RWPE1 (cell line): ENCODE measurements at regions of chr12 and their contacts with region 1.

Region 1: DNA sequence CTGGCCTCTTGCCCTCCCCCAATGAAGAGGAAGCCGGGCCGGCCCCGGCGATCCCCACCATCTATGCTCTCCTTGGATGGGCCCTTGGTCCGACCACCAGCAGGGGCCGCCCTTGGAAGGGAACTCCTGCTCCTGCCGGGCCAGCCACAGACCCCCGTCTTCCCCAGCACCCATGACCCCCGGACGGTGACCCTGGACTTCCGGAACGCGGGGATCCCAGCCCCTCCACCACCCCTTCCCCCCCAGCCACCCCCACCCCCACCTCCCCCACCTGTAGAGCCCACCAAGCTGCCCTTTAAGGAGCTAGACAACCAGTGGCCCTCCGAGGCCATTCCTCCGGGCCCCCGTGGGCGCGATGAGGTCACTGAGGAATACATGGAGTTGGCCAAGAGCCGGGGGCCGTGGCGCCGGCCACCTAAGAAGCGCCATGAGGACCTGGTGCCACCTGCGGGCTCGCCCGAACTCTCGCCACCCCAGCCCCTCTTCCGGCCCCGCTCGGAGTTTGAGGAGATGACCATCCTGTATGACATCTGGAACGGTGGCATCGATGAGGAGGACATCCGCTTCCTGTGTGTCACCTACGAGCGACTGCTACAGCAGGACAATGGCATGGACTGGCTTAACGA is 19.4 kb downstream of the SETD1B start:
- DNase-seq: no peak
- H3K27ac ChIP-seq: peak overlapping the region; percentile 35; the same call in 1 of the 2 replicates
- CTCF ChIP-seq: no peak

Region 2: DNA sequence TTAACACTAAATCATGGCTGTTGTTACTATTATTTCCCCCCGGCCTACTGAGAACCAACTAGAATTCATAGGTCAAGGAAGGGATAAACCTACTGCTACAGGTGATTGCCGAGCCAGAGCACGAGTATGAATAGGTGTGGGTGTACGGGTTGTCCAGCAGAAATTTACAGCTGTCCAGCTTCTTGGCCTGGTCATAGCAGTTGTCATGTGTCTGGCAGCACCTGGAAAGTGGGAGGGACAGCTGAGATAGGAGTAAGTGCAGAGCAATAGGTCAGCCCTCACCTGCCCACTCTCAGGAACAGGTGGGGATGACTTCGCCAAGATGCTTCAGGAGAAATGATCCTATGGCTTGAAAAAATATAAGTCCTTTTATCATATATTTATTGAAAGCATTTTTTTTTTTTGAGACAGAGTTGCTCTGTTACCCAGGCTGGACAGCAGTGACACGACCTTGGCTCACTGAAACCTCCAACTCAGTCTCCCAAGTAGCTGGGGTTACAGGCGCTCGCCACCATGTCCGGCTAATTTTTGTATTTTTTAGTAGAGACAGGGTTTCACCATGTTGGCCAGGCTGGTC is 1498.3 kb before region 1 on chr12:
- CTCF ChIA-PET with region 1: interaction called, 12 read pairs
- POLR2A ChIA-PET with region 1: no interaction called
- DNase-seq: no peak
- H3K27ac ChIP-seq: no peak overlapping the region
- CTCF ChIP-seq: no peak

Region 3: DNA sequence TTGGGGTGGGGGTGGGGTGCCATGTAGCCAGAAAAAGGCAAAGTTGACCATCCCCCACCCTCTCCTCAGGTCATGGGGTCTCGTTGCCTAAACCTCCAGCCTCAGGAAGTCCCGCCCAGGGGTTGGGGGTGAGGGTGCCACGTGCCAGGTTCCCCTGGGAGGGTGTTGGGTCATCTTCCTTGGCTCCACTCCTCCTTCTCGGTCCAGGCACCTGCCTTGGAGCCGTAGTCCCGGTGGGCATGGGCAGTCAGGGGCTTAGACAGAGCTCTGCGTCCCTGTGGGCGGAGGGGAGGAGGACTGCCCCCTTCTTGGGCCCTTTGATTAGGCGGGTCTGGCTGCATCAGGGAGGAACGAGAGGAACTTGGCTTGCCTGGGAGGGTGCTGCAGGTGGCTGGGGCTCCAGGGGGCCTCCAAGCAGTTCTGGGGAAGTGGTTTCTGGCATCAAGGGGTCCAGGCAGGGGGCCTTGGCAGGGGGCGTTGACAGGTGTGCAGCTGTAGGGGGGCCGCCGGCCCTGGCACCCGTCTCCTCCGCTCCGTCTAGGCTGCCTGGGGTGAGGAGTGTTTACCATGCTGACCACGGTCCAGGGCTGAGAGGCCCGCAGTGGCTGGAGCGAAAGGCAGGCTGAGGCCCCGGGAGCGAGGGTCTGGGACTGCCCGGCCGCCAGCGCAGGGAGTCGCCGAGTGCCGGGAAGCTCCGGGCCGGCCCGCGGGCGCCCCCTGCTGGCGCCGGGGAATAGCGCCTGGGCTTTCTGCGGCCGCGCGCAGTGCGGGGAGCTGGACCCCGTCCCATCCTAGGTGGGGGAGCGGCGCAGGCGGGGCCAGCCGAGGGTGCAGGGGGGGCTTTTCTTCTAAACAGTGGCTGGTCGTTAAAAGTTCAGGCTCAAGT is 11.5 kb before region 1 on chr12:
- CTCF ChIA-PET with region 1: interaction called, 13 read pairs
- POLR2A ChIA-PET with region 1: interaction called, 3 read pairs
- DNase-seq: no peak
- H3K27ac ChIP-seq: peak overlapping the region; percentile 99
- CTCF ChIP-seq: peak; percentile 96